Calu3 (cell line): ENCODE measurements at regions of chr14 and their contacts with region 1.

Region 1: GRCh38 chr14:75427482-75428229 is at the start of gene JDP2:
- DNase-seq: peak; percentile 87
- H3K4me3 Mint-ChIP-seq: peak within 1 kb of the TSS; percentile 73
- H3K27ac Mint-ChIP-seq: no peak within 1 kb of the TSS
- H3K4me1 Mint-ChIP-seq: peaks cover 22% of the 10 kb centered on the region
- H3K27me3 Mint-ChIP-seq: no peaks in the 10 kb centered on the region
- CTCF ChIP-seq: no peak
- total RNA-seq, gene JDP2: 18.8 and 24.1 TPM in 2 replicates

Region 2: DNA sequence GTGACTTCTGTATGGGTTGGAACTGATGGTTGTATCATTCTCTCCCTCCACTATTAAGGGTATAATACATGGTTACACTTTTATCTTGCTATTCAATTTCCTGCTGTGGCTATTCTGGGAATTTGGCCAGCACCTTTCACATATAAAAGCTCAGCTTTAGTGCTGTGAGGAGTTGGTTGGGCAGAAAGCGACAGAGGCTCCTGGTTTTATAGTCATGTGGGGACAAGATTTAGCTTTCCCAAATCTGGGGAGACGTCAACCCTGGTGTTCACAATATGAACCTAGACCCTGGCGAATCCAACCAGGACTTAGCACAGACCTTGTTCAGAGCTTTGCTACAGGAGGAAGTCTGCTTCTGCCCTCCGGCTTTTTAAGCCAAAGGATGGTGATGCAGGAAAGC is 112.5 kb before region 1 on chr14:
- CTCF ChIA-PET with region 1: no interaction called
- intact Hi-C with region 1: loop called (anchors 5 kb)
- DNase-seq: peak; percentile 11
- H3K4me3 Mint-ChIP-seq: no peak overlapping the region
- H3K27ac Mint-ChIP-seq: no peak overlapping the region
- H3K4me1 Mint-ChIP-seq: peaks cover 26% of the 10 kb centered on the region
- H3K27me3 Mint-ChIP-seq: peaks cover 21% of the 10 kb centered on the region
- CTCF ChIP-seq: no peak

Region 3: GRCh38 chr14:75928690-75929181 is 501.1 kb after region 1 on chr14:
- CTCF ChIA-PET with region 1: no interaction called
- intact Hi-C with region 1: no loop called
- DNase-seq: no peak
- H3K4me3 Mint-ChIP-seq: no peak overlapping the region
- H3K27ac Mint-ChIP-seq: no peak overlapping the region
- H3K4me1 Mint-ChIP-seq: no peaks in the 10 kb centered on the region
- H3K27me3 Mint-ChIP-seq: no peaks in the 10 kb centered on the region
- CTCF ChIP-seq: no peak